CD4-positive, alpha-beta memory T cell (primary cell): ENCODE measurements at regions of chr10 and their contacts with region 1.

Region 1: GRCh38 chr10:7787857-7788638 is at the starts of genes ATP5F1C and KIN:
- DNase-seq: peak; percentile 96 to 97 (median 97)
- H3K4me3 ChIP-seq: peak within 1 kb of the TSS; percentile 91 to 99
- H3K4me3 Mint-ChIP-seq: no peak within 1 kb of the TSS
- H3K27ac ChIP-seq: peak within 1 kb of the TSS; percentile 75
- H3K27ac Mint-ChIP-seq: peak within 1 kb of the TSS in 1 of 7 donors; percentile 36
- H3K4me1 ChIP-seq: peaks cover 77% of the 10 kb centered on the region
- H3K4me1 Mint-ChIP-seq: peaks cover 45 to 72% (median 56%) of the 10 kb centered on the region in 4 donors
- H3K27me3 ChIP-seq: no peaks in the 10 kb centered on the region
- H3K27me3 Mint-ChIP-seq: no peaks in the 10 kb centered on the region
- total RNA-seq, gene ATP5F1C: 124 to 135 TPM
- total RNA-seq, gene KIN: 14.5 to 14.7 TPM

Region 2: GRCh38 chr10:7810443-7810842 is 22.4 kb after region 1 on chr10:
- CTCF ChIA-PET with region 1: interaction called, 4 read pairs
- POLR2A ChIA-PET with region 1: interaction called, 11 read pairs
- intact Hi-C with region 1: no loop called
- DNase-seq: no peak
- H3K4me3 ChIP-seq: no peak overlapping the region
- H3K4me3 Mint-ChIP-seq: no peak overlapping the region
- H3K27ac ChIP-seq: no peak overlapping the region
- H3K27ac Mint-ChIP-seq: peak overlapping the region in 3 of 7 donors; percentile 9 to 52 (median 48)
- H3K4me1 ChIP-seq: no peaks in the 10 kb centered on the region
- H3K4me1 Mint-ChIP-seq: no peaks in the 10 kb centered on the region
- H3K27me3 ChIP-seq: no peaks in the 10 kb centered on the region
- H3K27me3 Mint-ChIP-seq: peaks cover 3 to 6% of the 10 kb centered on the region in 2 donors

Region 3: GRCh38 chr10:7818295-7819122 is 30.5 kb after region 1 on chr10 and contains the start of gene TAF3:
- CTCF ChIA-PET with region 1: interaction called, 9 read pairs
- POLR2A ChIA-PET with region 1: interaction called, 102 read pairs
- intact Hi-C with region 1: loop called (anchors 1 kb)
- DNase-seq: peak; percentile 90 to 92 (median 90)
- H3K4me3 ChIP-seq: peak within 1 kb of the TSS; percentile 76 to 83
- H3K4me3 Mint-ChIP-seq: peak within 1 kb of the TSS; percentile 92 to 99 (median 97)
- H3K27ac ChIP-seq: peak within 1 kb of the TSS; percentile 59
- H3K27ac Mint-ChIP-seq: peak within 1 kb of the TSS; percentile 86 to 96 (median 91)
- H3K4me1 ChIP-seq: peaks cover 24% of the 10 kb centered on the region
- H3K4me1 Mint-ChIP-seq: peaks cover 24 to 51% (median 38%) of the 10 kb centered on the region in 4 donors
- H3K27me3 ChIP-seq: no peaks in the 10 kb centered on the region
- H3K27me3 Mint-ChIP-seq: peaks cover 3 to 10% of the 10 kb centered on the region in 2 donors
- total RNA-seq, gene TAF3: 21.4 to 21.8 TPM